AG04449 (cell line): ENCODE measurements at regions of chr1 and their contacts with region 1.

Region 1: GRCh38 chr1:21963477-21964217 is 13.2 kb upstream of the CELA3B start:
- DNase-seq: no peak
- H3K4me3 ChIP-seq: no peak overlapping the region
- CTCF ChIP-seq: peak; percentile 94

Region 2: GRCh38 chr1:21090463-21090862 is 873.2 kb before region 1 on chr1:
- CTCF ChIA-PET with region 1: no interaction called
- POLR2A ChIA-PET with region 1: no interaction called
- DNase-seq: no peak
- H3K4me3 ChIP-seq: no peak overlapping the region
- CTCF ChIP-seq: no peak

Region 3: DNA sequence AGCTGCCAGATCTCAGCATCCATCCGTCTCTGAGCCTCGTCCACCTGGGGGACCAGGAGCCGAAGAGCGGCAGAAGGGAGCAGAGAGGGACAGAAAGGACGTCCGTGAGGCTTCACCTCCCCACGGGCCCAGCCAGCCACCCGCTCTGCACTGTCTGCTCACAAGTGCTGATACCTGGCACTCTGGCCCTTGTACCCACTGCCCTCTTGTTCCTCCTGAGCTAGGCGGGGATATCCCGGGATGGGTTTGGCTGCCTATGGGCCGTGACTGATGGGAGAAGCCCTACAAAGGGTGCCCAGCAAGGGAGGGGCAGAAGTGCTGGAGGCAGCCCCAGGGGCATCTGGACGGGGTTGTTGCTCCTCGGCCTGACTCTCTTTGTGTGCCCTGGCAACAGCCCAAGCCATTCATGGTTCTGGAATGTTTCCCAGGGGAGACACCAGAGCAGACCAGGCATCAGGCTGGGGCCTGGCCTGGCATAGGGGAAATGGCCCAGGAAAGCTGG is 94.0 kb before region 1 on chr1:
- CTCF ChIA-PET with region 1: interaction called, 13 read pairs
- POLR2A ChIA-PET with region 1: no interaction called
- DNase-seq: peak; percentile 54
- H3K4me3 ChIP-seq: no peak overlapping the region
- CTCF ChIP-seq: no peak

Region 4: DNA sequence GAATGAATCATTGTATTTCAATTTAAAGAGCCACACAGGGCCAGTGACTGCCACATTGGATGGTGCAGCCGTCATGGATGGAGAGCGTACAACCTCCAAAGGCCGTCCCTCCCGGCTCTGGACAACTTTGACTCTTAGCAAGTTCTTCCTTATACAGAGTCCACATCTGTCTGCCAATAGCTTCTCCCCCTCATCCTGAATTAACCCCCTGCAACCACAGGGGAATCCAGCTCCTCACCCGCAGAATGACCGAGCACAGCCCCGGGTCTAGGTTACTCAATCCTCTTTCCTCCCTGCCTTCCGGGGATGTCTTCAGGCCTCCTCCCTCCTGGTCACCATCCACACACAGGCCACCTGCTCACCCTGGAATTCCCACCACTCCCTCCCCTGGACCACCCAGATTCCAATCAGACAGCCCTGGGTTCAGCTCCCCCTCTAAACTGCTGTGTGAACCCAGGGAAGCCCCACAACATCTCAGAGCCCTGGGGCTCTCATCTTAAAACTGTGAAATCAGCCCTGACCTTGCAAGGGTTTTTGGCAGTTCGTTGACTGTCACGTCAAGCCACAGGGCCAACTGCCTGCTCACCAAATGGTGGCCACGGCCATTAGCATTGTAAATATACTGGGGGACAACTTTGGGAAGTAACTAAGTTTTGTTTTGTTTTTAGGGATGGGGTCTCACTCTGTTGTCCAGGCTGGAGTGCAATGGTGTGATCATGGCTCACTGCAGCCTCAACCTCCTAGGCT is 80.8 kb before region 1 on chr1:
- CTCF ChIA-PET with region 1: interaction called, 10 read pairs
- POLR2A ChIA-PET with region 1: no interaction called
- DNase-seq: no peak
- H3K4me3 ChIP-seq: no peak overlapping the region
- CTCF ChIP-seq: no peak

Region 5: GRCh38 chr1:21901473-21901847 is 62.2 kb before region 1 on chr1:
- CTCF ChIA-PET with region 1: interaction called, 18 read pairs
- POLR2A ChIA-PET with region 1: no interaction called
- DNase-seq: no peak
- H3K4me3 ChIP-seq: no peak overlapping the region
- CTCF ChIP-seq: peak; percentile 17

Region 6: GRCh38 chr1:21909787-21910503 is 53.7 kb before region 1 on chr1:
- CTCF ChIA-PET with region 1: interaction called, 31 read pairs
- POLR2A ChIA-PET with region 1: no interaction called
- DNase-seq: no peak
- H3K4me3 ChIP-seq: no peak overlapping the region
- CTCF ChIP-seq: no peak

Region 7: GRCh38 chr1:21937372-21938221 is 26.1 kb before region 1 on chr1:
- CTCF ChIA-PET with region 1: interaction called, 12 read pairs
- POLR2A ChIA-PET with region 1: interaction called, 3 read pairs
- DNase-seq: no peak
- H3K4me3 ChIP-seq: peak overlapping the region; percentile 43
- CTCF ChIP-seq: no peak

Region 8: DNA sequence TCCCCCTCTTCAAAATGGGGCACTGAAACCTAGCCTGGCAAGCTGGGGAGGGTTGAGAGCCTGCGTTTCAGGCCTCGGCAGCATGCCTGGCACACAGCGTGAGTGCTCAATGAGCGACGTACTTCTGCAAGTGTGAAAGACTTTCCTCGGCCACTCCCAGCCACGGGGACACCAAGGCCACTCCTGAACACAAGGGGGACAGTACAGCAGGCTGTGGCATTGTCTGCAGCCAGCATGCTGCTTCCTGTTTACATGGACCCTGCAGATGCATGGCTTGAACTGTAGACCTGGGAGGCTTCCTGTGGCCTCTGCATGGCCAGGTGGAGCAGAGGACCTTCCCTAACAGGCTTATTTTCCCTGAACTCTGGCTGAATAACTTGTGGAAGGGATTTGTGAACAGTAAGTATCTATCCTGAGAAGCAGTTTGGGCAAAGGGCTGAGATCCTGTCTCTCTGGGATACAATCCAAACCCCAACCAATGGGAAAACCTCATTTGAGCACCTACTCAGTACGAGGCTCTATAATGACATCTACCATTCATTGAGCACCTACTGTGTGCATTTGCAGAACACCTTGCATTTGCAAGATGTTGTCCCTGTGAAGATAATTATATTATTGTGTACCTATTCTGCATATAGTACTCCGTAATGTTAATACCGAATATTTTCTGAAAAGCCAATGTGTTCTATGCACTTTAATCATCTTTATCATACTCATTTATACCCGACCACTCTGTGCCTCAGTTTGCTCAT is 16.6 kb before region 1 on chr1:
- CTCF ChIA-PET with region 1: interaction called, 10 read pairs
- POLR2A ChIA-PET with region 1: no interaction called
- DNase-seq: no peak
- H3K4me3 ChIP-seq: no peak overlapping the region
- CTCF ChIP-seq: no peak